Mammary epithelial cell (primary cell): ENCODE measurements at regions of chr12 and their contacts with region 1.

Region 1: GRCh38 chr12:69470189-69471075 is at the start of gene FRS2:
- DNase-seq: peak; percentile 85
- H3K4me3 ChIP-seq: peak within 1 kb of the TSS; percentile 92 to 99 (median 94)
- H3K27ac ChIP-seq: peak within 1 kb of the TSS; percentile 84
- H3K4me1 ChIP-seq: peaks cover 27% of the 10 kb centered on the region
- H3K27me3 ChIP-seq: no peaks in the 10 kb centered on the region
- CTCF ChIP-seq: peak; percentile 24 to 57
- total RNA-seq, gene FRS2: 30.0 to 72.7 TPM

Region 2: DNA sequence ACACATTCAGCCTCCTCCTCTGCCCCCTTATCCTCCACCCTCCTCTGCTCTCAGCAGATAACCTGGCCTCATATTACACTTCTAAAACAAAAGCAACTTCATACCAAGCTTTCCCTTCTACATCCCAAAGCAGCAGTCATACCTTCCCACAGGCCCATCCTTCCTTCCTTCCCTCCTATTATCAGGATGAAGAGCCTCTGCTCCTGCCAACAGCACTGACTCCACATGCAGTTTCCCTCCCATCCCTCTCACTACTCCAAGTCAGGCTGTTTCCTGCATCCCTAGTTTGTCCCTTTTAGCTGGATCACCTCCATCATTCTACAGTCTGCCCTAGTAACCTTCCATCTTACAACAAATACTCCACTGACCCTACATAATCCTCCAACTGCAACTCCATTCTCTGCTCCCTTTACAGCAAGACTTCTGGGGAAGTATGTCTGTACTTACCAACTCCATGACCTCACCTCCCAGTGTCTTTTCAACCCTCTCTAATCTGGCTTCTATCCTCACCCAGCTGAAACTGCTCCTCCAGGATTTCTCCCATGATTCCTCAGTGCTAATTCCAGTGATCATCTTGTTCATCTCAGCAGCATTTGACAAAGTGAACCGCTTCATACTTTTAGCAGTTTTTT is 115.8 kb before region 1 on chr12:
- CTCF ChIA-PET with region 1: no interaction called
- dilution Hi-C with region 1: no loop called
- in situ Hi-C with region 1: no loop called
- intact Hi-C with region 1: loop called (anchors 2 kb)
- DNase-seq: no peak
- H3K4me3 ChIP-seq: no peak overlapping the region
- H3K27ac ChIP-seq: no peak overlapping the region
- H3K4me1 ChIP-seq: peaks cover 8% of the 10 kb centered on the region
- H3K27me3 ChIP-seq: no peaks in the 10 kb centered on the region
- CTCF ChIP-seq: no peak

Region 3: GRCh38 chr12:69405466-69405865 is 65.0 kb before region 1 on chr12:
- CTCF ChIA-PET with region 1: no interaction called
- dilution Hi-C with region 1: loop called (anchors 10 kb)
- in situ Hi-C with region 1: no loop called
- intact Hi-C with region 1: no loop called
- DNase-seq: peak; percentile 86
- H3K4me3 ChIP-seq: no peak overlapping the region
- H3K27ac ChIP-seq: no peak overlapping the region
- H3K4me1 ChIP-seq: peaks cover 12% of the 10 kb centered on the region
- H3K27me3 ChIP-seq: no peaks in the 10 kb centered on the region
- CTCF ChIP-seq: no peak

Region 4: DNA sequence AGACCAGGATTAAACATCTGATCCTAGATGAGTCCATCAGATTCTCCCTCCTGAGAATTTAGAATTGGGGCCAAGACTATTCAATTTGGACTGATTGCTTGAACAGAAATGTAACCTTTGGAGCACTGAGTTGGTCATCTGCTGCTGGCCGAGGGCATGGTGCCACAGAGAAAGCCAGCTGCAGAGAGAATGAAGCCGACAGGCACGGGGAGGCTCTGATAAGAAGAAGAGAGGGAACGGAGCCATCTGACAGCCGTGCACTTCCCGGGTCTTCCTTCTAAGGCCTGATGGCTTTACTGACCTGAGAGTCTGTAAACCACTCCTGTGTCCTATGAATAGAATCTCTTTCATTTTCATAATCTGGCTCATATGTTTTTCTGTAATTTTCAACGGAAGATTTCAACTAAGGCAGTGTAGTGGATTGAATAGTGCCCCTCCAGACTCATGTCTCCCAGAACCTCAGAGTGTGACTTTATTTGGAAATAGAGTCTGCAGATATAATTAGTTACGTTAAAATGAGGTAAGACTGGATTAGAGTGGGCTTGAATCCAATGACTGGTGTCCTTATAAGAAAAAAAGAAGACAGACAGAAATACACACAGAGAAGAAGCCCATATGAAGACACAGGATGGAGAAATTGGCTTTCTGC is 39.4 kb before region 1 on chr12:
- CTCF ChIA-PET with region 1: no interaction called
- dilution Hi-C with region 1: no loop called
- in situ Hi-C with region 1: no loop called
- intact Hi-C with region 1: no loop called
- DNase-seq: no peak
- H3K4me3 ChIP-seq: no peak overlapping the region
- H3K27ac ChIP-seq: no peak overlapping the region
- H3K4me1 ChIP-seq: no peaks in the 10 kb centered on the region
- H3K27me3 ChIP-seq: no peaks in the 10 kb centered on the region
- CTCF ChIP-seq: no peak

Region 5: GRCh38 chr12:69442894-69443293 is 27.5 kb before region 1 on chr12:
- CTCF ChIA-PET with region 1: no interaction called
- dilution Hi-C with region 1: no loop called
- in situ Hi-C with region 1: no loop called
- intact Hi-C with region 1: no loop called
- DNase-seq: peak; percentile 29
- H3K4me3 ChIP-seq: no peak overlapping the region
- H3K27ac ChIP-seq: no peak overlapping the region
- H3K4me1 ChIP-seq: no peaks in the 10 kb centered on the region
- H3K27me3 ChIP-seq: no peaks in the 10 kb centered on the region
- CTCF ChIP-seq: no peak

Region 6: GRCh38 chr12:69534389-69534822 is 64.0 kb after region 1 on chr12:
- CTCF ChIA-PET with region 1: no interaction called
- dilution Hi-C with region 1: no loop called
- in situ Hi-C with region 1: no loop called
- intact Hi-C with region 1: loop called (anchors 5 kb)
- DNase-seq: peak; percentile 98
- H3K4me3 ChIP-seq: no peak overlapping the region
- H3K27ac ChIP-seq: peak overlapping the region; percentile 94
- H3K4me1 ChIP-seq: peaks cover 8% of the 10 kb centered on the region
- H3K27me3 ChIP-seq: no peaks in the 10 kb centered on the region
- CTCF ChIP-seq: no peak

Region 7: GRCh38 chr12:69585189-69586062 is 115.0 kb after region 1 on chr12 and contains the start of gene CCT2:
- CTCF ChIA-PET with region 1: no interaction called
- dilution Hi-C with region 1: no loop called
- in situ Hi-C with region 1: no loop called
- intact Hi-C with region 1: loop called (anchors 1 kb)
- DNase-seq: peak; percentile 90
- H3K4me3 ChIP-seq: peak within 1 kb of the TSS; percentile 75 to 96 (median 80)
- H3K27ac ChIP-seq: peak within 1 kb of the TSS; percentile 94
- H3K4me1 ChIP-seq: peaks cover 4% of the 10 kb centered on the region
- H3K27me3 ChIP-seq: no peaks in the 10 kb centered on the region
- CTCF ChIP-seq: peak in 1 of 2 donors; percentile 43
- total RNA-seq, gene CCT2: 208 to 237 TPM